ENCODE measurements at regions of chr9 and their contacts with region 1.

Region 1: DNA sequence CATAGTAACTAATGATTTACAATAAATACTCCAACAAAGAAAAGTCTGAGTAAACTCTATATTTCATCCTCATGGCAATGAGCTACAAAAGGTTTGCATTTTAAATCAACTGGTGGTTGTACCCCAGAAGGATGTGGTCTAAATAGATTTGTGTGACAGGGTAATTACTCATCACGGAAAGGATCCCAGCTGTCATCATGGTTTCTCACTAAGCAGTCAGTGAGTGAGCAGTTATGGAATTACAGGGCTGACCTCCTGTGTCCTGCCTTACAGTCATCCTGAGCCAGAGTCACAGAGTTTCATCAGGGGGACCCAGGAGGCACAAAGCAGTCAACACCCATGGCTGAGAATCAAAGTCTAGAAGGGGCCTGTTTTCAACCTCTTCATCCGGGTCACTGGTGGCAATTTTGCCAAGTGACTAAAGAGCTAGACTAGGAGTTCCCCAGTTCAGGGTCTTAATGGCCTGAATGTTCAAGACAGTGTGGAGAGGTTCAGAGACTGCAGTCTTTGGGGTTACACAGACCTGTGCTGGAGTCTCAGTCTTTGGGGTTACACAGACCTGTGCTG is 210.7 kb upstream of the SLC24A2 start:
- DNase-seq: peak; percentile 62
- H3K4me3 Mint-ChIP-seq: peak overlapping the region; percentile 63
- H3K27ac Mint-ChIP-seq: peak overlapping the region; percentile 99
- H3K4me1 Mint-ChIP-seq: peaks cover 66% of the 10 kb centered on the region
- H3K27me3 Mint-ChIP-seq: no peaks in the 10 kb centered on the region

Region 2: DNA sequence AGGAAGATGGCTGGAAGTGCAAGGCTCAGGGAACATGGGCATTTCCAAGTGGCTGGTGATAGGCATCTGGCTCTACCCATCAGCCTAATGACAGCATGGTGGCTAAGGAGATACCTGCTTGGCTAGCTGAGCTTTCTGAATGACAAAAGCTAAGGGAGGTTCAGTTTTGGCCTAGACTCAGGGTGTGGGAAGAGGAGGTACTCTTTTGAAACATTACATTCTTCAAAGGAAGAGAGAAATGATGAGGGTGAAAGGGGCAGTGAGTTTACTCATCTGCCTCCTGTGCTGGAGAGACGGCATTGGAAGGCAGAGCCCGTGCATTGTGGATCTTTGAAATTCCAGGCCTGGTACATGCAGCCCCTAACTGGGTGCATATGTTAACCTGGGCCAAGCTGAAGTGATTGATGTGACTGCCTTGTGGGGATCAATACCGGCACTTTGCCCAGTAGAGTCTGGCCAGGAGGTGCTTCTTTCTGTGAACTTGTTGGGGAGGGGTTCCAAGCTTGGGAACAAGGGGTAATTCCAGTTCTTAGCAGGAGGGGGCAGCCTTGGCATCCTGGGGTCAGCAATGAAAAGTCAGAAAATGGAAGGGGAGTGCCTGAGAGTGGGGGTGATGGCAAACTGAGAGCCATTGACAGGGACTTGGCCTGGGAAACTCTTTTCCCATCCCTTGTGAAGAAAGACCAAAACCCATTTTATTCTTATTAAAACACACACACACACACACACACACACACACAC is 482.2 kb before region 1 on chr9:
- intact Hi-C with region 1: loop called (anchors 10 kb)
- DNase-seq: no peak
- H3K4me3 Mint-ChIP-seq: no peak overlapping the region
- H3K27ac Mint-ChIP-seq: no peak overlapping the region
- H3K4me1 Mint-ChIP-seq: peaks cover 27% of the 10 kb centered on the region
- H3K27me3 Mint-ChIP-seq: peaks cover under 1% of the 10 kb centered on the region

Region 3: DNA sequence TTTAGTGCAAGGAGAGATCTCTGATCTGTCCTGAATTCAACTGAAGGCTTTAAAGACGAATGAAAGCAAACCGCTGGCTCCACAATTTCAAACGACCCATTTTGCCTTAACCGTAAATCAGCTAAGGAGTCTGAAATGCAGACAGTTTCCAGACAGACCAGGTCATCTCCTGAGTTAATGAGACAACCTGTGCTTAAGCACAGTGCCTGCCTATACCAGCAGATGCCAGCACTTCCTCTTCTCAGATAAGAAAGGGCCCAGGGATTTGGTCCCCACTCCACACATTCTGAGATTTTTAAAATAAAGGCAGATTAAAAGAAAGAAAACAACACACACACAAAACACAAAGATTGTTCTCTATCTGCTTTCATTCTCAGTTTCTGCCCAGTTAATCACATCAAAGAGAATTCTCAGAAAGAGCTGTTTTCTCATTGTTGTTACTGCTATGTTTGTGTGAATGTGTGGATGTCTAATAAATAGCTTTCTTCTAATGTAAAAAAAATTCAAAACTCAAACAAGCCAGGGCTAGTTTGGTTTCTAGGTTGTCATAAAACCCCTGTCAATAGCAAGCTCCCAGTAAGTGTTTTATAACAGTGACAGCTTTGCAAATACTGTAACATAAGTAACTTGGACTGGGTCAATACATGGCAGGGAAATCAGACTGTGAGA is 53.0 kb before region 1 on chr9:
- intact Hi-C with region 1: loop called (anchors 2 kb)
- DNase-seq: no peak
- H3K4me3 Mint-ChIP-seq: no peak overlapping the region
- H3K27ac Mint-ChIP-seq: no peak overlapping the region
- H3K4me1 Mint-ChIP-seq: peaks cover 22% of the 10 kb centered on the region
- H3K27me3 Mint-ChIP-seq: peaks cover 13% of the 10 kb centered on the region

Region 4: GRCh38 chr9:20043035-20043434 is 43.5 kb after region 1 on chr9:
- intact Hi-C with region 1: loop called (anchors 1 kb)
- DNase-seq: no peak
- H3K4me3 Mint-ChIP-seq: peak overlapping the region; percentile 78
- H3K27ac Mint-ChIP-seq: peak overlapping the region; percentile 79
- H3K4me1 Mint-ChIP-seq: peaks cover 45% of the 10 kb centered on the region
- H3K27me3 Mint-ChIP-seq: no peaks in the 10 kb centered on the region

Region 5: GRCh38 chr9:20508242-20508641 is 508.7 kb after region 1 on chr9:
- intact Hi-C with region 1: loop called (anchors 2 kb)
- DNase-seq: peak; percentile 30
- H3K4me3 Mint-ChIP-seq: peak overlapping the region; percentile 13
- H3K27ac Mint-ChIP-seq: peak overlapping the region; percentile 5
- H3K4me1 Mint-ChIP-seq: peaks cover 77% of the 10 kb centered on the region
- H3K27me3 Mint-ChIP-seq: no peaks in the 10 kb centered on the region

Region 6: GRCh38 chr9:20684035-20684872 is 684.7 kb after region 1 on chr9 and contains the start of gene FOCAD:
- intact Hi-C with region 1: loop called (anchors 1 kb)
- DNase-seq: peak; percentile 96
- H3K4me3 Mint-ChIP-seq: peak within 1 kb of the TSS; percentile 89
- H3K27ac Mint-ChIP-seq: peak within 1 kb of the TSS; percentile 79
- H3K4me1 Mint-ChIP-seq: peaks cover 33% of the 10 kb centered on the region
- H3K27me3 Mint-ChIP-seq: no peaks in the 10 kb centered on the region
- total RNA-seq, gene FOCAD: 31.2 and 33.7 TPM in 2 replicates

Measured in activated T-helper 1 cell treated with anti-CD3 and anti-CD28 coated beads, Interleukin-12 subunit alpha, Interleukin-12 subunit beta, Interleukin-2, Interleukin-4 antibody, amounts not matched to agents 30 ng/mL and 10 ng/mL and 1 ng/mL, durations not matched to agents 14 hours and 24 hours and 36 hours (primary cell).